CD14-positive monocyte (primary cell): ENCODE measurements at regions of chr20 and their contacts with region 1.

Region 1: GRCh38 chr20:61773081-61773631 is 292.5 kb downstream of the TAF4 start:
- DNase-seq: no peak
- H3K4me3 ChIP-seq: no peak overlapping the region
- H3K4me3 Mint-ChIP-seq: no peak overlapping the region
- H3K27ac ChIP-seq: no peak overlapping the region
- H3K27ac Mint-ChIP-seq: no peak overlapping the region
- H3K4me1 ChIP-seq: no peaks in the 10 kb centered on the region
- H3K4me1 Mint-ChIP-seq: no peaks in the 10 kb centered on the region
- H3K27me3 ChIP-seq: no peaks in the 10 kb centered on the region
- H3K27me3 Mint-ChIP-seq: peaks cover 0 to 2% (median 1%) of the 10 kb centered on the region in 3 donors
- CTCF ChIP-seq: no peak

Region 2: GRCh38 chr20:61569846-61570245 is 203.3 kb before region 1 on chr20:
- intact Hi-C with region 1: no loop called
- DNase-seq: no peak
- H3K4me3 ChIP-seq: no peak overlapping the region
- H3K4me3 Mint-ChIP-seq: no peak overlapping the region
- H3K27ac ChIP-seq: no peak overlapping the region
- H3K27ac Mint-ChIP-seq: no peak overlapping the region
- H3K4me1 ChIP-seq: no peaks in the 10 kb centered on the region
- H3K4me1 Mint-ChIP-seq: no peaks in the 10 kb centered on the region
- H3K27me3 ChIP-seq: no peaks in the 10 kb centered on the region
- H3K27me3 Mint-ChIP-seq: no peaks in the 10 kb centered on the region
- CTCF ChIP-seq: no peak

Region 3: GRCh38 chr20:61588411-61589386 is 184.5 kb before region 1 on chr20:
- intact Hi-C with region 1: no loop called
- DNase-seq: no peak
- H3K4me3 ChIP-seq: no peak overlapping the region
- H3K4me3 Mint-ChIP-seq: no peak overlapping the region
- H3K27ac ChIP-seq: no peak overlapping the region
- H3K27ac Mint-ChIP-seq: no peak overlapping the region
- H3K4me1 ChIP-seq: no peaks in the 10 kb centered on the region
- H3K4me1 Mint-ChIP-seq: no peaks in the 10 kb centered on the region
- H3K27me3 ChIP-seq: no peaks in the 10 kb centered on the region
- H3K27me3 Mint-ChIP-seq: peaks cover 0 to 4% (median 2%) of the 10 kb centered on the region in 3 donors
- CTCF ChIP-seq: no peak

Region 4: GRCh38 chr20:61886721-61887594 is 113.8 kb after region 1 on chr20:
- intact Hi-C with region 1: loop called in 1 of 2 experiments (anchors 2 kb)
- DNase-seq: no peak
- H3K4me3 ChIP-seq: no peak overlapping the region
- H3K4me3 Mint-ChIP-seq: no peak overlapping the region
- H3K27ac ChIP-seq: no peak overlapping the region
- H3K27ac Mint-ChIP-seq: no peak overlapping the region
- H3K4me1 ChIP-seq: no peaks in the 10 kb centered on the region
- H3K4me1 Mint-ChIP-seq: no peaks in the 10 kb centered on the region
- H3K27me3 ChIP-seq: no peaks in the 10 kb centered on the region
- H3K27me3 Mint-ChIP-seq: peaks cover 5 to 9% (median 8%) of the 10 kb centered on the region in 3 donors
- CTCF ChIP-seq: peak; percentile 63